Caco-2 (cell line): ENCODE measurements at regions of chr2 and their contacts with region 1.

Region 1: DNA sequence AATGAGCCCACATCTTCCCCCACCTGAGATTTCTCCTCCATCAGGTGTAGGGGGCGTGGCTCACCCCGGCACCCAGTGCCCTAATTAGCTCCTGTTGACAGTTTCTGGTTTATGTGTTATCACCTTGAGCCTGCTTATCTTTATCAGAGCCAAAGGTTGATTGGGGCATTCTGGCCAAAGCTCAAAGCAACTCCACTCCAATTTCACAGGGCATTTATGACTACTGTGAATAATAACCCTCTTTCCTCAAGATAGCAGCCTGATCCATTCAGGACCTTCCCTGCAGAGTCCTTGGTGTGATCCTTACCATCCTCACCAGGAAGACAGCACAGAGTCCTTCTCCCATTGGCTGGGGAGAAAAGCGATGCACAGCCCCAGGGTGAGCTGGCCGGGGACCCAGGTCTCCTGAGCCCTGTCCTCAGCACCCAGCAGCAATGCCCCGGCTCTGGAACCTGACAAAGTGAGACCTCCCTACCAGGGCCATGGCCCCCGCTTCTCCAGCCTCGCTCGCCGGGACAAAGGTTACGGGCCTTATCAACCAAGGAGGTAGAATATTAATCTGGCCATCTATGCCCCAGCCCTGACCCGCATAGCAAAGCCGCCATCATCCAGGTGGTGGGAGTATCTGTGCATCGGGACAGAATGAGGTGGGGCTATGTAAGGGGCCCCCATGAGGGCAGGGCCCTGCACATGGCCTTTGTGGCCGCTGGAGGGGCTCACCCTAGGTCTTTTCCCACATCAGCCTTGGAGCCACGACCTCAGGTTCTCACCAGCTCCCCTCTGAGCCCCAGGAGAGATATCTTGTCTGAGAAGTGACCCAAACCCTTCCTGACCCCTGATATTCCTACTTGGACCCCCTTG is 64.5 kb downstream of the ZFP36L2 start:
- DNase-seq: peak; percentile 94 to 98
- H3K4me3 ChIP-seq: peak overlapping the region; percentile 19
- H3K4me3 Mint-ChIP-seq: peak overlapping the region; percentile 56
- H3K27ac Mint-ChIP-seq: peak overlapping the region; percentile 95
- H3K4me1 ChIP-seq: peaks cover 79% of the 10 kb centered on the region
- H3K4me1 Mint-ChIP-seq: peaks cover 59% of the 10 kb centered on the region
- H3K27me3 ChIP-seq: no peaks in the 10 kb centered on the region
- H3K27me3 Mint-ChIP-seq: no peaks in the 10 kb centered on the region
- CTCF ChIP-seq: peak; percentile 32 to 58

Region 2: GRCh38 chr2:43041661-43042360 is 120.1 kb before region 1 on chr2:
- CTCF ChIA-PET with region 1: interaction called, 5 read pairs
- POLR2A ChIA-PET with region 1: no interaction called
- intact Hi-C with region 1: loop called (anchors 1 kb)
- DNase-seq: peak; percentile 79 to 93
- H3K4me3 ChIP-seq: no peak overlapping the region
- H3K4me3 Mint-ChIP-seq: peak overlapping the region; percentile 35
- H3K27ac Mint-ChIP-seq: peak overlapping the region; percentile 99
- H3K4me1 ChIP-seq: peaks cover 89% of the 10 kb centered on the region
- H3K4me1 Mint-ChIP-seq: peaks cover 48% of the 10 kb centered on the region
- H3K27me3 ChIP-seq: no peaks in the 10 kb centered on the region
- H3K27me3 Mint-ChIP-seq: no peaks in the 10 kb centered on the region
- CTCF ChIP-seq: no peak

Region 3: DNA sequence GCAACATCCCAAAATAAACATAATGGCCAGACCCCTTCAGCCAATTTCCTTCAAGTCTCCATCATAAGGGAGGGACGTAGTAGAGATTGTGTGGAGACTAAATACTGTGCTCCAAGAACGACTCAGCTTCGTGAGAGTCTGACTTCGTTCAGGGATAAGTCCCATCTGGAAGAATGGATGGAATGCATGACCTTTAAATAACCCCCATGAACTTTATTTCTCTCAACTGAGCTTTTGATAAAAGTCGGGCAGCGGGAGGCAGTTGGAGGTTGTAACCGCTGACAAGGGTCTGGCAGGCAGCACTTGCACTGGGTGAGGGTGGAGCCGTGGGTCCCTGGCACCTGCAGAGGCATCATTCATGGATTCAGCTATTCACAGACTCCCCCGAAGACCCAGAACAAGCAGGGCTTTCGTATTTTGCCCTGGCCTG is 51.4 kb before region 1 on chr2:
- CTCF ChIA-PET with region 1: no interaction called
- POLR2A ChIA-PET with region 1: interaction called, 13 read pairs
- intact Hi-C with region 1: no loop called
- DNase-seq: peak; percentile 36 to 64
- H3K4me3 ChIP-seq: no peak overlapping the region
- H3K4me3 Mint-ChIP-seq: no peak overlapping the region
- H3K27ac Mint-ChIP-seq: no peak overlapping the region
- H3K4me1 ChIP-seq: peaks cover 34% of the 10 kb centered on the region
- H3K4me1 Mint-ChIP-seq: peaks cover 48% of the 10 kb centered on the region
- H3K27me3 ChIP-seq: no peaks in the 10 kb centered on the region; the same call in 1 of the 2 replicates
- H3K27me3 Mint-ChIP-seq: no peaks in the 10 kb centered on the region
- CTCF ChIP-seq: no peak

Region 4: GRCh38 chr2:43144263-43144662 is 17.6 kb before region 1 on chr2:
- CTCF ChIA-PET with region 1: interaction called, 4 read pairs
- POLR2A ChIA-PET with region 1: no interaction called
- intact Hi-C with region 1: loop called (anchors 1 kb)
- DNase-seq: no peak
- H3K4me3 ChIP-seq: no peak overlapping the region
- H3K4me3 Mint-ChIP-seq: no peak overlapping the region
- H3K27ac Mint-ChIP-seq: peak overlapping the region; percentile 48
- H3K4me1 ChIP-seq: peaks cover 12% of the 10 kb centered on the region
- H3K4me1 Mint-ChIP-seq: peaks cover 8% of the 10 kb centered on the region
- H3K27me3 ChIP-seq: no peaks in the 10 kb centered on the region
- H3K27me3 Mint-ChIP-seq: no peaks in the 10 kb centered on the region
- CTCF ChIP-seq: no peak

Region 5: GRCh38 chr2:43219383-43220228 is 57.7 kb after region 1 on chr2:
- CTCF ChIA-PET with region 1: interaction called, 13 read pairs
- POLR2A ChIA-PET with region 1: interaction called, 11 read pairs
- intact Hi-C with region 1: loop called (anchors 1 kb)
- DNase-seq: peak; percentile 91 to 92
- H3K4me3 ChIP-seq: peak overlapping the region; percentile 98
- H3K4me3 Mint-ChIP-seq: peak overlapping the region; percentile 70
- H3K27ac Mint-ChIP-seq: peak overlapping the region; percentile 76
- H3K4me1 ChIP-seq: peaks cover 40% of the 10 kb centered on the region
- H3K4me1 Mint-ChIP-seq: peaks cover 30% of the 10 kb centered on the region
- H3K27me3 ChIP-seq: no peaks in the 10 kb centered on the region
- H3K27me3 Mint-ChIP-seq: no peaks in the 10 kb centered on the region
- CTCF ChIP-seq: no peak